Panc1 (cell line): ENCODE measurements at regions of chr19 and their contacts with region 1.

Region 1: DNA sequence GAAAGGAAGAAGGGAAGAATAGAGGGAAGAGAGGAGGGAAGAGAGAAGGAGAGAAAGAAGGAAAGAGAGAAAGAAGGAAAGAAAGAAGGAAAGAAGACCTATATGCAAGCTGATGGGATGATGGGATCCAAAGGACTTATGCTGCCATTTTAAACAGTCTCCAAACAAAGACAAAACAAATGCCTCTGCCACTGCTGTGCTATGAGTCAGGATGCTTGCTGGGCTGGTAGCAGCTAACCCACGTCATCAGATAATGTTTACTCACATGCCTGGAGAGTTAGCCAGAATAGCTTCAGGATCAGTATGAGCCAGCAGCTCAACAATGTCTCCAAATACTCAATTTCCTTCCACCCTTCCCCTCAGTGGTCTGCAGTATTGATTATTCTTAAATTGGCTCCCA is 12.0 kb upstream of the ZNF274 start:
- DNase-seq: no peak
- ATAC-seq: peak; percentile 68; the same call in 1 of the 2 replicates
- H3K4me3 ChIP-seq: no peak overlapping the region
- H3K27ac ChIP-seq: no peak overlapping the region
- H3K4me1 ChIP-seq: no peaks in the 10 kb centered on the region
- H3K27me3 ChIP-seq: no peaks in the 10 kb centered on the region
- CTCF ChIP-seq: no peak

Region 2: DNA sequence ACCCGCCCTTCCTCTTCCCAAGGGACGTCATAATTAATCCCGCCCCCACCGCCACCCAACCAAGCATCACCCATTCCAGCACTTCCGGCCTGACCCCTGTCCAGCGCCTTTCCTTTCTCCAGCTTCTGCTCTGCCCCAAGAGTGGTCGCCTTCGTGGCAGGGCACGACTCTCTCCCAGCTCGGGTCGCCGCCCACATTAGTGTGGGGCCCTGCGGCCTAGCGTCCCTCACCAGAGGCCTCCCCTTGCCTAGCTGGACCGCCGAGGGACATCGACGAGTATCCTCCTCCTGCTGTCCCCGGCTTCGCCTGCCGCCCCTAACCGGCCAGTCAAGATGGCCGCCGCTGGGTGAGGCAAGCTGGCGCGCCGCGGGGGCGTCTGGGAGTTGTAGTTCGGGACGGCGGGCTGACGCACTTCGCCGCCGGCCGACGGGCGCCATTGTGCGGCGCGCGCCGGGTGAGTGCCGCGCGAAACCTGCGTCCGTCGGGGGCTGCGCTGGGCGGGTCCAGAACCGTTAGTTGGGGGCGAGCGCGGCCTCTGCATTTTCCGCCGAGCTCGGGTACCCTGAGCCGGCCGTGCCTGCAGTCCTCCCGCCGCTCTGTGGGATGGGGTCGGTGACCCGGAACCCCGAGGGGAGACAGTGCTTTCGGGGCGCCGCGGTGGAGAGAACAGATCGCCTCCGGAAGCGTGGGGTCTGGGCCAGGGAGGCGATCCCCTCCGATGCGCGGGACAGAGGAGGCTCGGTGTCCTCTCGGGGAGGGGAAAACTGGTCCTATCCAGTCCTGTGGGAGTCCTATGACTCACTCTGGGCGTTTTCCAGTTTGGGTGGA is 12.3 kb after region 1 on chr19 and contains the start of gene ZNF274:
- CTCF ChIA-PET with region 1: no interaction called
- POLR2A ChIA-PET with region 1: interaction called, 14 read pairs
- in situ Hi-C with region 1: no loop called
- intact Hi-C with region 1: no loop called
- DNase-seq: peak; percentile 53
- ATAC-seq: peak; percentile 96
- H3K4me3 ChIP-seq: peak within 1 kb of the TSS; percentile 55 to 61
- H3K27ac ChIP-seq: peak within 1 kb of the TSS; percentile 75
- H3K4me1 ChIP-seq: no peaks in the 10 kb centered on the region
- H3K27me3 ChIP-seq: no peaks in the 10 kb centered on the region
- CTCF ChIP-seq: no peak
- total RNA-seq, gene ZNF274: 13.7 TPM

Region 3: DNA sequence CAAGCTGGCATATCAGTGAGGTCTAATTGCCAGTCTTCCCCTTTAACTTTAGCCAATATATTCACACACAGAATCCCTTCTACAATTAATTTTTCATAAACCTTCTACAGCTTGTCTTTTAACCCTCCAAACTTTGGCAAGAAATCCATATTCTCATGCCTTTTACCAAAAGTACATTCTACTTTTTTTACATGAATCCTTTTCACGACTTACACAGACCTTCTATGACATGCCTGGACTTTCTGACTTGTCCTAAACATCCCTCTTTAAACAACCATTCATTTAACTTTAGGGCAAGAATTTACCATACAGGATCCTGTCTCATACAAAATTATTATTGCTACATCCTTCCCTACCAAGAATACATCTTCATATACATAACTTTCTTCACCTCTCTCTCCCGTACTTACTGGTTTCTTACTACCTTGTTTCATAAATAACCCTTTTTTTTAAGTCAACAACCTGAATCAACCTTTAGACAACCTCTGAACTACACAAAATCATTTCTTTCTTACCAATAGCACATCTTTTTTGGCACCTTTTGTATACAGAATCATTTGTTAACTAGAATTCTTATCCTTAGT is 81.3 kb after region 1 on chr19:
- CTCF ChIA-PET with region 1: no interaction called
- POLR2A ChIA-PET with region 1: no interaction called
- in situ Hi-C with region 1: no loop called
- intact Hi-C with region 1: no loop called
- DNase-seq: no peak
- ATAC-seq: no peak
- H3K4me3 ChIP-seq: no peak overlapping the region
- H3K27ac ChIP-seq: no peak overlapping the region
- H3K4me1 ChIP-seq: no peaks in the 10 kb centered on the region
- H3K27me3 ChIP-seq: no peaks in the 10 kb centered on the region
- CTCF ChIP-seq: no peak

Region 4: DNA sequence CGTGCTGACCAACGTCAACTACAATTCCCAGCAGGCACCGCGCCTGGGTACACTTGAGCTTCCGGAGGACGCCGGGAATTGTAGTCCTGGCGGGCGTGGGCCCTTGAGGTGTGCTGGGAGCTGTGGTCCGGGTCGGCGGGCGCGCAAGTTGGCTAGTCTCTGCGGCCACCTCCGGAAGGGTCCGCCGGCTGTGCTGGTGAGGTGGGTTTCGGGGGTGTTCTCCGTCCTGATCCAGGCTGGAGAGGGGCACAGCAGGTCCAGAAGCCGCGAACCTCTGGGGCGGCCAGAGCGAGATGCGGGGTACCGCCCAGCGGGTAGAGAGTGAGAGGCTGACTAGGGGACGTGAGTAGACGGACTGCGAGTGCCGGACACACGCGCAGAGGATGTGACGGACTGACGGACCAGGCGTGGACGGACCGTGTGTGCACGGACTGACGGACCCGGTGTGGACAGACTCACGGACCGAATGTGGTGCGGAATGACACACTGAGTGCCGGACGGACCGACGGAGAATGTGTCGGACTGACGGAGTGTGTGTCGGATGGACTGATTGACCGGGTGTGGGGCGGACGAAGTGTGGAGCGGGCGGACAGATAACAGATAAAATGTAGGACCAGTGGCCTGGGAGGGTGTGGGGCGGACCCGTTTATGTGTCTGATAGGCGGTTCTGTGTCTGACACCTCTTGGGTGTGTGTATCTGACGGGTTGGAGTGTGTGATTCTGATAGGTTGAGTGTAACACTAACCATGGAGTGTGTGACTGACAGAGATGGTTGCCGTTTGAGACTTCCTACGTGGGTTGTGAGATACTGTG is 156.3 kb after region 1 on chr19 and contains the start of gene ZSCAN22:
- CTCF ChIA-PET with region 1: interaction called, 3 read pairs
- POLR2A ChIA-PET with region 1: interaction called, 10 read pairs
- in situ Hi-C with region 1: no loop called
- intact Hi-C with region 1: no loop called
- DNase-seq: peak; percentile 88
- ATAC-seq: peak; percentile 97
- H3K4me3 ChIP-seq: peak within 1 kb of the TSS; percentile 74 to 89
- H3K27ac ChIP-seq: peak within 1 kb of the TSS; percentile 90
- H3K4me1 ChIP-seq: peaks cover 23% of the 10 kb centered on the region
- H3K27me3 ChIP-seq: no peaks in the 10 kb centered on the region
- CTCF ChIP-seq: no peak
- total RNA-seq, gene ZSCAN22: 6.6 TPM